Activated naive CD4-positive, alpha-beta T cell treated with anti-CD3 and anti-CD28 coated beads, Interleukin-2, amount 10 ng/mL, durations not matched to agents 7 days and 5 days (primary cell): ENCODE measurements at regions of chr17 and their contacts with region 1.

Region 1: GRCh38 chr17:45385331-45385997 is 47.2 kb downstream of the ARHGAP27 start:
- DNase-seq: peak; percentile 92
- H3K4me3 Mint-ChIP-seq: no peak overlapping the region
- H3K27ac Mint-ChIP-seq: no peak overlapping the region
- H3K4me1 Mint-ChIP-seq: peaks cover 24% of the 10 kb centered on the region
- H3K27me3 Mint-ChIP-seq: peaks cover 36% of the 10 kb centered on the region

Region 2: GRCh38 chr17:45317112-45317928 is 68.1 kb before region 1 on chr17:
- CTCF ChIA-PET with region 1: interaction called, 17 read pairs
- DNase-seq: peak; percentile 100
- H3K4me3 Mint-ChIP-seq: peak overlapping the region; percentile 81
- H3K27ac Mint-ChIP-seq: peak overlapping the region; percentile 91
- H3K4me1 Mint-ChIP-seq: peaks cover 80% of the 10 kb centered on the region
- H3K27me3 Mint-ChIP-seq: peaks cover 3% of the 10 kb centered on the region

Region 3: GRCh38 chr17:45402916-45403315 is 17.5 kb after region 1 on chr17:
- CTCF ChIA-PET with region 1: no interaction called
- DNase-seq: no peak
- H3K4me3 Mint-ChIP-seq: no peak overlapping the region
- H3K27ac Mint-ChIP-seq: peak overlapping the region; percentile 37
- H3K4me1 Mint-ChIP-seq: peaks cover 21% of the 10 kb centered on the region
- H3K27me3 Mint-ChIP-seq: no peaks in the 10 kb centered on the region